Mucosa of descending colon (tissue), 3 donors: ENCODE measurements at regions of chr12 and their contacts with region 1.

Region 1: DNA sequence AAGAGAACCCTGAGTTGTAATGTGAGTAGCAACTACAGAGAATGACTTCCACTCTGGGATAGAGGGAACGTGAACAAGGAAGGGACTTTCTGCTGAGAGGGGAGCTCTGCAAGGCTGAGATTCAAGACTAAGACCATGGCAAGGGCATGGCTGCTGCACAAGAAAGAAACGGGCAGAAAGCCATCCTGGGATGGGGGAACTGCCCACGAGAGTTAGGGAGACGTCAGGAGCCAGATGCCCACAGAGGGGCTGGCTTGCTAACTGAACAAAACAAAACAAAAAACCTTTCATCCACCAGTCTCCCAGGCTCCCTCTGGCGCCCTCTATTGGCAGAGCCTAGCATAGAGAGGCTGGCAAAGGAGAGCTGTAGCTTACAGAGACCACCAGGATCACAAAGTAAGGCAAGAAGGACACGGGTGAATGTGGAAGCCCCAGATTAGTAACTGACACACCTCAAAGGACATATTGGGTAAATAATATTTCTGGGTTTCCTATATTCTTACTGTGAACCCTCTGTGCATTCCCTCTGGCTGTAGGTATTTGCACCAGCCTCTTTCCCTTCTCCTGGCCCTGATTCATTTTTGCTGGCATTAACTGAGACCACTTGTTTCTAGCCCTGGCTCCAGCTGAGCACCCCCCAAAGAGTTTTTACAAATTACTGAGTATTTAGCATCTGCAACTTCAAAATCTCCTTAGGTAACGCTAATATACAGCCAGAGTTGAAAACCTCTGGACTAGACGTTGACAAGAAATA is 338.3 kb downstream of the EMP1 start:
- DNase-seq: peak in 2 of 3 donors; percentile 75 to 81
- ATAC-seq: peak; percentile 51
- H3K4me3 ChIP-seq: no peak overlapping the region
- H3K4me1 ChIP-seq: no peaks in the 10 kb centered on the region
- CTCF ChIP-seq: peak; percentile 76

Region 2: DNA sequence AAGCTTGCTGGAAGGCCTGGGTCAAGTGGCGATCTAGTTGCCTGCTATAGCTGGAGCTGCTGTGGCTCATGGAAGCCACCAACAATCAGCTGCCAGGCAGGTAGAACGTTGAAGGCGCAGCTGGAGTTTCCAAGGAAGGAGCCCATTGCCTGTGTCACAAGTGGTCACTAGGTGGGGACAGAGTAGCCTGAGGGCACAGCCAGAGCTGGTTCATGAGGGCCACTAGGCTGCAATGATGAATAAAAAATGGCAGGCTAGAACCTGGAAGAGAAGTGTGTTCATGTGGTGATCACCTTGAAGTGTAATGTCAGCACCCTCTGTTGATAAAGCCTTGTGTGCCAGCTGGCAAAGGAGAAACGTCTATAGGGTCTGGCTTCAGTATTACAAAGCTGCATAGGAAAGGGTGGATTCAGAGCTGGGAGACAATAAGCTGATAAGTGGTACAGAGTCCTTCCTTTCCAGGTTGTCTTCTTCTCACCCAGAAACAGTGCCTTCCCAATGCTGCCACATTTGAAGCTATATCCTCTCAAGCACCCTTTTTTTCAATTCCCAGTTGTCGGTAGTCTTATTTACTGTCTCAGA is 172.5 kb before region 1 on chr12:
- intact Hi-C with region 1: loop called (anchors 5 to 10 kb)
- DNase-seq: peak; percentile 63 to 89 (median 83)
- ATAC-seq: peak; percentile 100
- H3K4me3 ChIP-seq: no peak overlapping the region
- H3K4me1 ChIP-seq: no peaks in the 10 kb centered on the region
- CTCF ChIP-seq: peak; percentile 55

Region 3: DNA sequence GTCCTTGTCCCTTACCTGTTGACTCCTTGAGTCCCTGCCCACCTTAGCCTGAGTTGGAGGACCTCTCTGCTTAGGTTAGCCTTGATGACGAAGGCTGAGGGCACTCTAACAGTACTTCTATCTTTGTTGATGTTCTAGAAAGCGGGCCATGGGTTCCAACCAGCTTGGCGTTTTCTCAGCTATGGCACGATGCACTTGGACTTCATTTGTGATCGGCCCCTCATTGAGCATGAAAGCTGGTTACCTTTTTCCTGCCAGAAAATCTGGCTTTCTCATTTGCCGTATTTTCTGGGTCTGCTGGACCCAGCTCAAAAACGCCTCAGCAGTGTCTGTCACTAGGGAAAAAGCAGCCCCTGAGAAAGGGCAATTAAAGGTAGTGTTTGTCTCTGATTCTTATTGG is 47.5 kb before region 1 on chr12:
- intact Hi-C with region 1: no loop called
- DNase-seq: no peak
- ATAC-seq: no peak
- H3K4me3 ChIP-seq: no peak overlapping the region
- H3K4me1 ChIP-seq: no peaks in the 10 kb centered on the region
- CTCF ChIP-seq: no peak